GM12878 (cell line): ENCODE measurements at regions of chr2 and their contacts with region 1.

Region 1: GRCh38 chr2:134021830-134022524 is 231.9 kb upstream of the MGAT5 start:
- DNase-seq: peak; percentile 78
- ATAC-seq: peak; percentile 98
- H3K4me3 ChIP-seq: no peak overlapping the region
- H3K27ac ChIP-seq: no peak overlapping the region
- H3K4me1 ChIP-seq: peaks cover 25% of the 10 kb centered on the region
- H3K27me3 ChIP-seq: no peaks in the 10 kb centered on the region
- CTCF ChIP-seq: no peak
- EP300 ChIP-seq: peak in 1 of 2 experiments; percentile 68; a peak in 1 of 4 replicates
- POLR2A ChIP-seq: no peak
- RAD21 ChIP-seq: no peak

Region 2: GRCh38 chr2:133953524-133953923 is 68.5 kb before region 1 on chr2:
- CTCF ChIA-PET with region 1: no interaction called
- POLR2A ChIA-PET with region 1: no interaction called
- RAD21 ChIA-PET with region 1: no interaction called
- SMC1A ChIA-PET with region 1: interaction called, 3 read pairs
- in situ Hi-C with region 1: no loop called
- intact Hi-C with region 1: loop called (anchors 5 kb)
- DNase-seq: peak; percentile 51
- ATAC-seq: peak; percentile 81
- H3K4me3 ChIP-seq: no peak overlapping the region
- H3K27ac ChIP-seq: peak overlapping the region; percentile 27; the same call in 1 of the 2 replicates
- H3K4me1 ChIP-seq: peaks cover 46% of the 10 kb centered on the region
- H3K27me3 ChIP-seq: no peaks in the 10 kb centered on the region
- CTCF ChIP-seq: no peak
- EP300 ChIP-seq: no peak
- POLR2A ChIP-seq: no peak
- RAD21 ChIP-seq: no peak

Region 3: GRCh38 chr2:134009440-134009839 is 12.5 kb before region 1 on chr2:
- CTCF ChIA-PET with region 1: no interaction called
- POLR2A ChIA-PET with region 1: no interaction called
- RAD21 ChIA-PET with region 1: no interaction called
- SMC1A ChIA-PET with region 1: no interaction called
- in situ Hi-C with region 1: no loop called
- intact Hi-C with region 1: no loop called
- DNase-seq: no peak
- ATAC-seq: no peak
- H3K4me3 ChIP-seq: no peak overlapping the region
- H3K27ac ChIP-seq: no peak overlapping the region
- H3K4me1 ChIP-seq: no peaks in the 10 kb centered on the region
- H3K27me3 ChIP-seq: no peaks in the 10 kb centered on the region
- CTCF ChIP-seq: no peak
- EP300 ChIP-seq: no peak
- POLR2A ChIP-seq: no peak
- RAD21 ChIP-seq: no peak

Region 4: GRCh38 chr2:134104754-134105153 is 82.8 kb after region 1 on chr2:
- CTCF ChIA-PET with region 1: no interaction called
- POLR2A ChIA-PET with region 1: no interaction called
- RAD21 ChIA-PET with region 1: no interaction called
- SMC1A ChIA-PET with region 1: no interaction called
- in situ Hi-C with region 1: no loop called
- intact Hi-C with region 1: no loop called
- DNase-seq: no peak
- ATAC-seq: no peak
- H3K4me3 ChIP-seq: no peak overlapping the region
- H3K27ac ChIP-seq: no peak overlapping the region
- H3K4me1 ChIP-seq: no peaks in the 10 kb centered on the region
- H3K27me3 ChIP-seq: no peaks in the 10 kb centered on the region; a peak in 1 of 4 replicates
- CTCF ChIP-seq: no peak
- EP300 ChIP-seq: no peak
- POLR2A ChIP-seq: no peak
- RAD21 ChIP-seq: no peak

Region 5: DNA sequence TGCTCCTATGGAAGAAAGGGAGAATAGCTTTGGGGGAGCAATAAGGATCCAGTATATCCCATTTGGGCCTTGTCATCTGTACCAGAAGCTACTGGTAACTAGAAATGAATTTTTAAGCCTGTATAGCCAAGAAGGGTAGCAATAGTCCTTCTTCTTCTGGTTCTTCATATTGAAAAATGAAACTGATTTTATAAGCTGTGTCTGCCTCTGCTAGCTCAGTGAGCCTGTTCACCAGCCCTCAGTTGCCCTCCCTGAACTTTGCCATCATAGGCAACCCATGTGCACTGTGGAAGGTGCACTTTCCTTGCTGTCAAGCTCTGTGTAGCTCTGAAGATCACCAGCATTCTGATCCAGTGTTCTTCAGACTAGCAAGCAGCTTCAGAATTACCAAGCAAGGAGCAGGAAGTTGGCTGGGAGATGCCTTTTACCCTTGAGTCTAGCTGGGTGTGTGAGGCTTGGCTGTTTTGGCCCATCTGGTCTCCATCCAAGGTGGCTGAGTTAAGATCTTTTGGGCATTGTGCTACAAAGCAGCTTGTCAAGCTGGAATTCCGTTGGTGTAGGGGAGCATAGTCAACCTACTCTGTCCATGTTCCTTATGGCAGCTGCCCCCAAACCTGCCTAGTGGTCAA is 176.1 kb after region 1 on chr2:
- CTCF ChIA-PET with region 1: no interaction called
- POLR2A ChIA-PET with region 1: no interaction called
- RAD21 ChIA-PET with region 1: no interaction called
- SMC1A ChIA-PET with region 1: no interaction called
- in situ Hi-C with region 1: no loop called
- intact Hi-C with region 1: loop called (anchors 5 kb)
- DNase-seq: no peak
- ATAC-seq: peak; percentile 62
- H3K4me3 ChIP-seq: no peak overlapping the region
- H3K27ac ChIP-seq: peak overlapping the region; percentile 52
- H3K4me1 ChIP-seq: peaks cover 31% of the 10 kb centered on the region
- H3K27me3 ChIP-seq: no peaks in the 10 kb centered on the region
- CTCF ChIP-seq: no peak
- EP300 ChIP-seq: no peak
- POLR2A ChIP-seq: no peak
- RAD21 ChIP-seq: no peak